ENCODE measurements at regions of chr9 and their contacts with region 1.

Region 1: DNA sequence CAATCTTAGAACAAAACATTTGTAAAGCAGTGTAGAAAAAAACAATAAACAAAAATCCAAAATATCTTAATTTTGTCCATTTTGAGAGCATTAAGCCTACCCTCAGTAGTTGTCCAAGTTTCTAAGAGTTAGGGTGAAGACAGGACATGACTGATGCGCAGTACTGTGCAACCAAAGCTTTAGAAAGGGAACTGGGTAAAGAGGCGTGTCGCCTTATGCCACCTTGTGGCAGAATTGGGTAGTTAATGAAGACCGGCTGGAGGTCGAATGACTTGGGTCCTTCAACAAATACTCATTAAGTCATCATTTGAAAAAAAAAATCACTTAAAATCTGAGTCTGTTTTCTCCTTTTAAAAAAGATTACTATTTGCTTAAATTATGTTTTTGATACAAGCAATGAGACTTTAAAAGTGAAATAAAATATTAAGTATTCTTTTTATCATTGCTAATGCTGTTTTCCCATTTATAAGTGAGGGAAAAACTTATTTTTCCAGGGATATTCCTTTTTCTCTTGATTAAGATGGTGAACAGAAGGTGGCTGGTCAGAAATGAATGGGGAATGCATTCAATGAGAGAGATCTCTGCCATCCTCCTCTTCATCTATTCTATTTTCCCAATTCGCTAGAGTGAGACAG is 3.5 kb upstream of the RNF20 start:
- DNase-seq: no peak
- ATAC-seq: peak; percentile 64

Region 2: GRCh38 chr9:101398068-101398929 is 131.9 kb before region 1 on chr9 and contains the starts of genes MRPL50 and ZNF189:
- intact Hi-C with region 1: loop called (anchors 5 kb)
- DNase-seq: peak; percentile 98
- ATAC-seq: peak; percentile 98
- total RNA-seq, gene MRPL50: 16.5 TPM
- total RNA-seq, gene ZNF189: 14.6 TPM

Region 3: DNA sequence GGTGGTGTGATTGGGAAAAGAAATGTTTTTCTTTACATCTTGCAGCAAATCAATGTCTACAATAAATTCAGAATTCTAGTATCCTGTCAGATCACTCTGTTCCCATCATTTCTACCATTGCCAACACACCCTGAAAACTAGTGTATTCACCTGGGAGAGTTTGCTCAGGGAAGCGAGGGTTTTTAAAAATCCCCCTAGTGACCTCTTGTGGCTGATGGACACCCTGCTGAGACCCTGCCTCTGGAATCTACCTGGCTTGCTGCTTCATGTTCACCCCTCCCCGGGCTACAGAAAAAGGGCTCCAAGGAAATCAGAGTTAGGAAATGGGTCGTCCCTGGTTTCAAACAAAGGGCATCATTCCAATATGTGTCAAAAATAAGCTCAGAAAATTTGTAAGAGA is 73.2 kb before region 1 on chr9:
- intact Hi-C with region 1: loop called (anchors 2 kb)
- DNase-seq: no peak
- ATAC-seq: no peak